GM12878 (cell line): ENCODE measurements at regions of chr1 and their contacts with region 1.

Region 1: DNA sequence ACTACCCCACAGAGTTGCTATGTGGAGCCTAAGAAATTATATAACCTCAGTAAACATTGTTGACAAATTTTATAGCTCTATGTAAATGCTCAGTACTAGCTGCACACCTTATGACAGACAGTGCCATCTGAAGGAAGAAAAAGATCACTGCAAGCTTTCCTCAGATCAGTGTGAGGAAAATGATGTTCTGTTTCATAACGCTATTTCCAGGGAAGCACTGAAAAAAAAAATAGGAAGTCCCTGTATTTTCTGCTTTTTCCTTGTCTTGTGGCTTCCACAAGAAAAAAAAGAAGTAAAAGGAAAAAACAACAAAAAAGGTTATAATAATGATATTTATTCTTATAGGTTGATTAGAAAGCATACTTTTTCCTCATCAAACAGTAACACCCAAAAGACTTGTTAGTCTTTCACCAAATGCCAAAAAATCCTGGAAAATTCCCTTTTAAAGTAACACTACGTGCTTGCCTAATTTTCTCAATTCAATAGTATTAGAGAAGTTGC is 23.2 kb downstream of the LYST start:
- DNase-seq: no peak
- ATAC-seq: peak; percentile 82
- H3K4me3 ChIP-seq: no peak overlapping the region
- H3K27ac ChIP-seq: no peak overlapping the region
- H3K4me1 ChIP-seq: peaks cover 7% of the 10 kb centered on the region
- H3K27me3 ChIP-seq: no peaks in the 10 kb centered on the region
- CTCF ChIP-seq: peak; percentile 66 to 75 (median 66)
- EP300 ChIP-seq: no peak
- POLR2A ChIP-seq: no peak
- RAD21 ChIP-seq: peak; percentile 69

Region 2: DNA sequence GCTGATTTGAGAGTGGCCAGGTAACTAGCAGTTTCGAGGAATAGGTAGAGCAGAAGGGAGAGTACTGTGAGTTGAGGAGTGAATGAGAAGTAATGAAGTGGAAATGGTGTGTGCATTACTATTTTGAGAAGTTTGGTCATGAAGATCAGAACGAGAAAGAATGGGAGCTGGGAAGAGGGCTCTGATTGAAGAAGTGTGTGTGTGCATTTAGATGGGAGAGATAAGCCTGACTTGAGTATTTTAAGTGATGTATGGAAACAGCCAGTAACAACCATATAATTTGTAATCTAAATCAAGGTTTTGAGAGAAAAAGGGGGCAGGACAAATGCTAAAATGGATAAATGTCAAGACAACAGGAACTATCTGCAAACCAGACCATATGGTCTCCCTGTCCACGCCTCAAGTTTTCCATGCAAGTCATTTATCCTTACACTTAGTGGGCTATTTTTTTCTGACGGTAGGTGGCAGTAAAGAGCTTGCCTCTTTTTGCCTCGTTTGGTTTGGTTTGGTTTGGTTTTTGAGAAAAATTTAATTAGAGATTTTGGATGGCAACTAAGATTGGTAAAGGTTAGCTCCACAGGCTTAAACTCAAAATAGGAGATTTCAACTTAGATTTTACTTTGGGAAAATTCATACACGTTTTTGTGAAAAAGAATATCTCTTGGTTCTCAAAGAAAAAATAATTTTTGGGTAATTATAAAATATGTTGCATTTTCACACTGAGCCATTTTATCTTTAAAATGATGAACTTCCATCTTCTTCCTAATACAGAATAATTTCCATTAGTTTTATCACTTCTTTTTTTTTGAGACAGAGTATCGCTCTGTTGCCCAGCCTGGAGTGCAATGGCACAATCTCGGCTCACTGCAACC is 329.8 kb before region 1 on chr1:
- CTCF ChIA-PET with region 1: interaction called, 22 read pairs
- POLR2A ChIA-PET with region 1: no interaction called
- RAD21 ChIA-PET with region 1: interaction called, 10 read pairs
- SMC1A ChIA-PET with region 1: interaction called, 13 read pairs
- in situ Hi-C with region 1: no loop called
- intact Hi-C with region 1: no loop called
- DNase-seq: no peak
- ATAC-seq: peak; percentile 70
- H3K4me3 ChIP-seq: no peak overlapping the region
- H3K27ac ChIP-seq: no peak overlapping the region
- H3K4me1 ChIP-seq: no peaks in the 10 kb centered on the region; the same call in 1 of the 2 replicates
- H3K27me3 ChIP-seq: no peaks in the 10 kb centered on the region
- CTCF ChIP-seq: peak; percentile 79 to 93 (median 82)
- EP300 ChIP-seq: no peak
- POLR2A ChIP-seq: no peak
- RAD21 ChIP-seq: peak; percentile 94

Region 3: GRCh38 chr1:235697508-235697907 is 146.0 kb before region 1 on chr1:
- CTCF ChIA-PET with region 1: interaction called, 11 read pairs
- POLR2A ChIA-PET with region 1: no interaction called
- RAD21 ChIA-PET with region 1: no interaction called
- SMC1A ChIA-PET with region 1: no interaction called
- in situ Hi-C with region 1: no loop called
- intact Hi-C with region 1: no loop called
- DNase-seq: no peak
- ATAC-seq: no peak
- H3K4me3 ChIP-seq: no peak overlapping the region
- H3K27ac ChIP-seq: no peak overlapping the region
- H3K4me1 ChIP-seq: no peaks in the 10 kb centered on the region
- H3K27me3 ChIP-seq: no peaks in the 10 kb centered on the region
- CTCF ChIP-seq: no peak
- EP300 ChIP-seq: no peak
- POLR2A ChIP-seq: no peak
- RAD21 ChIP-seq: no peak

Region 4: GRCh38 chr1:235783148-235783776 is 60.2 kb before region 1 on chr1:
- CTCF ChIA-PET with region 1: interaction called, 127 read pairs
- POLR2A ChIA-PET with region 1: no interaction called
- RAD21 ChIA-PET with region 1: interaction called, 49 read pairs
- SMC1A ChIA-PET with region 1: interaction called, 97 read pairs
- in situ Hi-C with region 1: no loop called
- intact Hi-C with region 1: no loop called
- DNase-seq: no peak
- ATAC-seq: peak; percentile 57
- H3K4me3 ChIP-seq: no peak overlapping the region
- H3K27ac ChIP-seq: no peak overlapping the region
- H3K4me1 ChIP-seq: no peaks in the 10 kb centered on the region
- H3K27me3 ChIP-seq: no peaks in the 10 kb centered on the region
- CTCF ChIP-seq: peak; percentile 29 to 52 (median 32); a peak in 3 of 6 replicates
- EP300 ChIP-seq: no peak
- POLR2A ChIP-seq: no peak
- RAD21 ChIP-seq: peak; percentile 77

Region 5: DNA sequence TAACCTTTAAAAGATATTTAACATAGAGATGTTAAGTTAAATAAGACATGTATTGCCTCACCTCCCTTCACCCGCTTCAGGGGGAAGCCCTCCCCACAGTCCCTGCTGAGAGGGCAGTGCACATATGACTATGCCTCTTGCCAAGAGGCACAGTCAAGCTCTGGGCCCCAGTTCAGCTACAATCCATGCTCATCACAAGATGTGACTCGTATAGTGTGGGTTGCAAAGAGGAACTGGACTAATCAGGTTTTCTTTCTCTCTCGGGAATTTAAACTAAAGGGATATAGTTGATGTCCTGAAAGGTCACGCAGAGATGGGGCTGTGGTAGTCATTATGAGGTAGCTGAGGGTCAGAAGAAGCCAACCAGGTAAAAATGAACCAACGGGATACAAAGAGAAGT is 12.4 kb before region 1 on chr1:
- CTCF ChIA-PET with region 1: interaction called, 129 read pairs
- POLR2A ChIA-PET with region 1: interaction called, 10 read pairs
- RAD21 ChIA-PET with region 1: interaction called, 68 read pairs
- SMC1A ChIA-PET with region 1: interaction called, 74 read pairs
- in situ Hi-C with region 1: no loop called
- intact Hi-C with region 1: no loop called
- DNase-seq: peak; percentile 35
- ATAC-seq: peak; percentile 99
- H3K4me3 ChIP-seq: no peak overlapping the region
- H3K27ac ChIP-seq: no peak overlapping the region
- H3K4me1 ChIP-seq: no peaks in the 10 kb centered on the region
- H3K27me3 ChIP-seq: no peaks in the 10 kb centered on the region
- CTCF ChIP-seq: no peak
- EP300 ChIP-seq: peak in 1 of 2 experiments; percentile 34; a peak in 1 of 4 replicates
- POLR2A ChIP-seq: no peak
- RAD21 ChIP-seq: no peak

Region 6: GRCh38 chr1:235883261-235883927 is 39.9 kb after region 1 on chr1:
- CTCF ChIA-PET with region 1: interaction called, 11 read pairs
- POLR2A ChIA-PET with region 1: interaction called, 4 read pairs
- RAD21 ChIA-PET with region 1: interaction called, 9 read pairs
- SMC1A ChIA-PET with region 1: interaction called, 9 read pairs
- in situ Hi-C with region 1: no loop called
- intact Hi-C with region 1: no loop called
- DNase-seq: peak; percentile 76
- ATAC-seq: peak; percentile 50
- H3K4me3 ChIP-seq: peak overlapping the region; percentile 33
- H3K27ac ChIP-seq: peak overlapping the region; percentile 71
- H3K4me1 ChIP-seq: peaks cover 36% of the 10 kb centered on the region
- H3K27me3 ChIP-seq: no peaks in the 10 kb centered on the region
- CTCF ChIP-seq: no peak
- EP300 ChIP-seq: no peak
- POLR2A ChIP-seq: no peak
- RAD21 ChIP-seq: no peak

Region 7: GRCh38 chr1:235971571-235972310 is 128.2 kb after region 1 on chr1:
- CTCF ChIA-PET with region 1: interaction called, 90 read pairs
- POLR2A ChIA-PET with region 1: interaction called, 5 read pairs
- RAD21 ChIA-PET with region 1: interaction called, 67 read pairs
- SMC1A ChIA-PET with region 1: interaction called, 56 read pairs
- in situ Hi-C with region 1: no loop called
- intact Hi-C with region 1: loop called (anchors 2 kb)
- DNase-seq: peak; percentile 84
- ATAC-seq: peak; percentile 97
- H3K4me3 ChIP-seq: peak overlapping the region; percentile 58
- H3K27ac ChIP-seq: peak overlapping the region; percentile 80
- H3K4me1 ChIP-seq: peaks cover 7% of the 10 kb centered on the region
- H3K27me3 ChIP-seq: no peaks in the 10 kb centered on the region
- CTCF ChIP-seq: peak; percentile 87 to 95 (median 89); a peak in 5 of 6 replicates
- EP300 ChIP-seq: no peak
- POLR2A ChIP-seq: peak; percentile 75
- RAD21 ChIP-seq: peak; percentile 98

Region 8: DNA sequence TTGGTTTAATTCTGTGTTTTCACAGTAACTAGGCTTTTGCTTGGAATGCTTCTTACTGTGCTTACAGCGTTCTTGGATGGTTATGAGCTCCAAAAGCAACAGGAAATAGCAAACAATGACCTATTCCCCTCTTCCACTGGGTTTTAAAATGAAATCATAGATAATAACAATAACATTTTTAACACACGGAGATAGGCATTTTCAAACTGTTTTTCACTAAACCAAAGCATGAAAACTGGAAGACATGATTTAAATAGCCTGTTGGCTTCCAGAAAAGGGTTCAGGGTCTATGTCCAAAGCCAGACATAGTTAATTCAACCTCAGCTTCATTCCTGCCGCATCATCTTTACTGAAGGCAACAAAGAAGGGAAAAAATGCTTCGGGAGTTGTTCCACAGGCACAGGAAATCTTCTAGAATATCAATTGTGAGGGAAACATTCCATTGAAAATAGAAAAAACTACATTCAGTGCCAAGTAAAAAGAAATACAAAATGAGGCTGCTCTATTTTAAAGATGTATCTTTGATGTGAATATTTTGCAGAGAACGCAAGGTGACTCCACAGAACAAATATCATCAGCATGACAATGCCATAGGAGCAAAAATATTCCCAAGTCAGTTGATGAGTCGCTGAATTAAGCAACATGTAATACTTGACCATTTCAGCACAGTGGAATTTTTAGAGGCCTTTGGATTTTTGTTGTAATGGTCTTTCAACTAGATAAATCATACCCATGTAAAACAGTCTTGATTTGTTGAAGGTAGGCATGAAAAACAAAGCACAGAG is 140.7 kb after region 1 on chr1:
- CTCF ChIA-PET with region 1: no interaction called
- POLR2A ChIA-PET with region 1: no interaction called
- RAD21 ChIA-PET with region 1: no interaction called
- SMC1A ChIA-PET with region 1: no interaction called
- in situ Hi-C with region 1: no loop called
- intact Hi-C with region 1: no loop called
- DNase-seq: no peak
- ATAC-seq: no peak
- H3K4me3 ChIP-seq: no peak overlapping the region
- H3K27ac ChIP-seq: no peak overlapping the region
- H3K4me1 ChIP-seq: peaks cover 4% of the 10 kb centered on the region; the same call in 1 of the 2 replicates
- H3K27me3 ChIP-seq: no peaks in the 10 kb centered on the region
- CTCF ChIP-seq: no peak
- EP300 ChIP-seq: no peak
- POLR2A ChIP-seq: no peak
- RAD21 ChIP-seq: no peak

Region 9: GRCh38 chr1:236099355-236099974 is 256.0 kb after region 1 on chr1:
- CTCF ChIA-PET with region 1: no interaction called
- POLR2A ChIA-PET with region 1: no interaction called
- RAD21 ChIA-PET with region 1: no interaction called
- SMC1A ChIA-PET with region 1: no interaction called
- in situ Hi-C with region 1: no loop called
- intact Hi-C with region 1: no loop called
- DNase-seq: no peak
- ATAC-seq: no peak
- H3K4me3 ChIP-seq: no peak overlapping the region
- H3K27ac ChIP-seq: no peak overlapping the region
- H3K4me1 ChIP-seq: peaks cover 5% of the 10 kb centered on the region
- H3K27me3 ChIP-seq: no peaks in the 10 kb centered on the region
- CTCF ChIP-seq: no peak
- EP300 ChIP-seq: no peak
- POLR2A ChIP-seq: no peak
- RAD21 ChIP-seq: no peak

Region 10: GRCh38 chr1:236175642-236176336 is 332.3 kb after region 1 on chr1:
- CTCF ChIA-PET with region 1: no interaction called
- POLR2A ChIA-PET with region 1: no interaction called
- RAD21 ChIA-PET with region 1: no interaction called
- SMC1A ChIA-PET with region 1: no interaction called
- in situ Hi-C with region 1: no loop called
- intact Hi-C with region 1: no loop called
- DNase-seq: no peak
- ATAC-seq: peak; percentile 70
- H3K4me3 ChIP-seq: no peak overlapping the region
- H3K27ac ChIP-seq: peak overlapping the region; percentile 33; the same call in 1 of the 2 replicates
- H3K4me1 ChIP-seq: peaks cover 14% of the 10 kb centered on the region
- H3K27me3 ChIP-seq: no peaks in the 10 kb centered on the region
- CTCF ChIP-seq: no peak
- EP300 ChIP-seq: no peak
- POLR2A ChIP-seq: no peak
- RAD21 ChIP-seq: no peak